ENCODE measurements at regions of chr3 and their contacts with region 1.

Region 1: GRCh38 chr3:28241221-28242160 is at the start of gene CMC1:
- DNase-seq: peak; percentile 99
- ATAC-seq: peak; percentile 100
- H3K4me3 ChIP-seq: peak within 1 kb of the TSS; percentile 76 to 97 (median 89)
- H3K27ac ChIP-seq: peak within 1 kb of the TSS; percentile 25 to 96 (median 88)
- H3K4me1 ChIP-seq: peaks cover 0 to 38% (median 21%) of the 10 kb centered on the region in 9 donors
- H3K27me3 ChIP-seq: no peaks in the 10 kb centered on the region
- CTCF ChIP-seq: peak in 1 of 9 donors; percentile 9
- total RNA-seq, gene CMC1: 16.9 to 38.5 (median 24.7) TPM

Region 2: DNA sequence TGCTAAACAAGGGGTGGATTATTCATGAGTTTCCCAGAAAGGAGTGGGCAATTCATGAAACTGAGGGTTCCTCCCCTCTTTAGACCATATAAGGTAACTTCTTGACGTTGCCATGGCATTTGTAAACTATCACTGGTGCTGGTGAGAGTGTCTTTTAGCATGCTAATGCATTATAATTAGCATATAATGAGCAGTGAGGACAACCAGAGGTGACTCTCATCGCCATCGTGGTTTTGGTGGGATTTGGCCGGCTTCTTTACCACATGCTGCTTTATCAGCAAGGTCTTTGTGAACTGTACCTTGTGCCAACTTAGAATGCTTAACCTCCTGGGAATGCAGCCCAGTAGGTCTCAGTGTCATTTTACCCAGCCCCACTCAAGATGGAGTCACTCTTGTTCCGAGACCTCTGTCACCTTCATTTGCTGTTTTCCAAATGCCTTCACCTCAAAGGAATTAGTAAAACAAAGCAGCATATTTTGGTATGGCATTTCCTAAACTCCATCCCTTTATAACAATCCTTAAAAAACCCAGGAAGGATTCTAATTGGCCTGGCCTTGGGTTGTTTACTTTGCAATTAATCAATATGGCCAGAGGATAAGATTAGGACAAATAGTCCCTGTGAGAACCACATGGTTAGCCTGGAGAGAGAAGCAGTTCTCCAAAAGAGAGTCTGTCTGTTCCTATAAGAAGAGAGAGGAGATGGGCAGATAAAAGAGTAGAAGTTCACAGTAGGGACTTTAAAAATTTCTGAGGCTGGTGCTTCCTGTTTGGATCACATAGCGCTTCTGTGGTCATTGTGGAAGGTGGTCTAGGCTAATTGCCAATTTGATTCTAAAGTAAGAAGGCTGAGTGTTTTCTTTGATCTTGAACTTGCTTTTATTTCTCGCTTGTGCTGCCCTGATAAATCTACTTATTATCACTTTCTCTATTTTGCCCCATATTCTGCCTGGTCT is 364.2 kb before region 1 on chr3:
- intact Hi-C with region 1: no loop called
- DNase-seq: no peak
- ATAC-seq: no peak
- H3K4me3 ChIP-seq: no peak overlapping the region
- H3K27ac ChIP-seq: no peak overlapping the region
- H3K4me1 ChIP-seq: peaks cover 0 to 13% (median 0%) of the 10 kb centered on the region in 9 donors
- H3K27me3 ChIP-seq: peaks cover 0 to 5% (median 0%) of the 10 kb centered on the region in 7 donors
- CTCF ChIP-seq: no peak

Region 3: GRCh38 chr3:28124882-28125281 is 116.6 kb before region 1 on chr3:
- intact Hi-C with region 1: no loop called
- DNase-seq: no peak
- ATAC-seq: no peak
- H3K4me3 ChIP-seq: no peak overlapping the region
- H3K27ac ChIP-seq: peak overlapping the region in 4 of 10 donors; percentile 3 to 49 (median 18)
- H3K4me1 ChIP-seq: peaks cover 0 to 13% (median 0%) of the 10 kb centered on the region in 9 donors
- H3K27me3 ChIP-seq: no peaks in the 10 kb centered on the region
- CTCF ChIP-seq: no peak

Region 4: DNA sequence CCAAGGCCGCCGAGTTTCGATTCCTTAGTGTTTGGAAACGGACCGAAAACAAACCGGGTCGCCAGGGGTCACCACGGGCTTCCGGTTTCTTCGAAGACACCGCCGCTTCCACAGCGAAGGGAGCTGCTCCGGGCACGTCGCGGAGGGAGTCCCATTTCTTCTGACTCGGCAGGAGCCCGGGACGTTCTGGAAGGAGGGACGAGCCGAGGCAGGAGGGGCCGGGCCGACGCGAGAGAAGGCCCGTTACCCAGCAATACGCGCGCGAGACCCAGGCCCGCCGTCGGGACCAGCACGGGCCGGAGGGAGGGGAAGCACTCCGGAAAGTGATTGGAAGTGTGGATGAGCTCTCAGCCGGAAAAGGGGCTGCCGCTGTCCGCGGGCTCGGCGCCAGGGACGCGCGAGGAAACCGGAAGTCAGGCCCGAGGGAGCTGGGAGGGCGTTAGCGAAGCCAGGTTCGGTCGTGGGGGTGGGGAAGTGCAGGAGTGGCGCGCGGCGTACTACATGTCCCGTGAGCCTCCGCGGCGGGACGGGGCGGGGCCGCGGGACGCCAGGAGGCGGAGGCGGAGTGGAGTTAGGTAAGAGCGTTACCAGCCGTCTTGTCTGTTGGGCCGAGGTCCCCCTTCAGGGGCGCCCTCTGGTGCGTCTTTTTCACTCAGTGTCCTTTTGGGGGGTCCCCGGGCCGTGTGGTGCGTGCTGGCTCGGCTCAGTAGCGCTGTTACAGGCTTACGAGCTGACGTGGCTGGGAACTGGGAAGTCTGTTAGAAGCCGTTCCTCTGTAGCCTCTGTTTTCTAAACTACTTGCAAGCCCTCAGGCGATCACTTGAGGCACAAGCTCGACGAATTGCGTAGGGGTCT is 107.4 kb after region 1 on chr3 and contains the starts of genes AZI2 and ZCWPW2:
- intact Hi-C with region 1: loop called in 1 of 10 experiments (anchors 5 kb)
- DNase-seq: peak; percentile 95 to 96
- ATAC-seq: peak; percentile 97 to 99 (median 99)
- H3K4me3 ChIP-seq: peak within 1 kb of the TSS; percentile 65 to 90 (median 82)
- H3K27ac ChIP-seq: peak within 1 kb of the TSS; percentile 97 to 100 (median 98)
- H3K4me1 ChIP-seq: peaks cover 9 to 63% (median 50%) of the 10 kb centered on the region in 9 donors
- H3K27me3 ChIP-seq: no peaks in the 10 kb centered on the region
- CTCF ChIP-seq: peak in 7 of 9 donors; percentile 9 to 43 (median 23)
- total RNA-seq, gene AZI2: 29.7 to 42.8 (median 35.8) TPM
- total RNA-seq, gene ZCWPW2: 1.6 to 4.0 (median 2.6) TPM

Measured in heart right ventricle (tissue), 16 donors.